ENCODE measurements at regions of chr4 and their contacts with region 1.

Region 1: GRCh38 chr4:7067452-7068278 is at the start of gene GRPEL1:
- DNase-seq: no peak
- total RNA-seq, gene GRPEL1: 43.5 TPM

Region 2: GRCh38 chr4:6783053-6783981 is 284.3 kb before region 1 on chr4:
- intact Hi-C with region 1: loop called (anchors 5 kb)
- DNase-seq: peak; percentile 98

Region 3: GRCh38 chr4:6909073-6909965 is 158.3 kb before region 1 on chr4 and contains the start of gene TBC1D14:
- intact Hi-C with region 1: loop called (anchors 1 kb)
- DNase-seq: peak; percentile 95
- total RNA-seq, gene TBC1D14: 30.8 TPM

Region 4: DNA sequence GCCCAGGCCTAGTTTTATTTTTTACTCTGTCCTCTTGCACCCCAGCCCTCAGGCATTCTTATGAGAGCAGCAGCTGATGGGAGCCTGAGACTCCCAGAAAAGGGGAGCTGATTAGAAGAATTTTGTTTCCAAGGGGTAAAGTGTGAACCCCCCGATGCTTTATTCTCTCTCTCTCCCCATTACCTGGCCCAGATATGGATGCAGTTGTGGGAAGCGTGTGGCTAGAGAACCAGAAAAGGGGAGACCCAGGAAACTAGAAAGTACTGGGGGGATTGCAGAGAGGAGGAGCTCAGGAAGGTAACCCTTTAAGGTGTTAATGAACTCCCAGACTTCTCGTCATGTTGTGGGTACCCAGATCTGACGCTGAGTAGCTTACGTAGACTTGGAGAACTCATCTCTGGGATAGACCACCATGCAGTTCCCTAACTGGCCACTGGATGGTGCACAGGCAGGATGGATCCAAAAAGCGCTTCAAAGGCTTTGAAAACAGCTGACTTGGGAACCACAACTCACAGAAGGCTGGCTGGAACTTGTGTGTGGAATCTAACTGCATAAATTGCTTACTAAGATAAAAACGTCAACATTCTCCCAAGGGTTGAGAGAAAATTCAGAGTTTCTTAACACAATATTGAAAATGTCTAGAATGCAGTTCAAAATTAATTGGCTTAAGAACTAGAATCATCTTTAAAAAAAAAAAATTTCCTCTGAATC is 93.4 kb before region 1 on chr4:
- intact Hi-C with region 1: loop called (anchors 1 kb)
- DNase-seq: peak; percentile 90

Region 5: DNA sequence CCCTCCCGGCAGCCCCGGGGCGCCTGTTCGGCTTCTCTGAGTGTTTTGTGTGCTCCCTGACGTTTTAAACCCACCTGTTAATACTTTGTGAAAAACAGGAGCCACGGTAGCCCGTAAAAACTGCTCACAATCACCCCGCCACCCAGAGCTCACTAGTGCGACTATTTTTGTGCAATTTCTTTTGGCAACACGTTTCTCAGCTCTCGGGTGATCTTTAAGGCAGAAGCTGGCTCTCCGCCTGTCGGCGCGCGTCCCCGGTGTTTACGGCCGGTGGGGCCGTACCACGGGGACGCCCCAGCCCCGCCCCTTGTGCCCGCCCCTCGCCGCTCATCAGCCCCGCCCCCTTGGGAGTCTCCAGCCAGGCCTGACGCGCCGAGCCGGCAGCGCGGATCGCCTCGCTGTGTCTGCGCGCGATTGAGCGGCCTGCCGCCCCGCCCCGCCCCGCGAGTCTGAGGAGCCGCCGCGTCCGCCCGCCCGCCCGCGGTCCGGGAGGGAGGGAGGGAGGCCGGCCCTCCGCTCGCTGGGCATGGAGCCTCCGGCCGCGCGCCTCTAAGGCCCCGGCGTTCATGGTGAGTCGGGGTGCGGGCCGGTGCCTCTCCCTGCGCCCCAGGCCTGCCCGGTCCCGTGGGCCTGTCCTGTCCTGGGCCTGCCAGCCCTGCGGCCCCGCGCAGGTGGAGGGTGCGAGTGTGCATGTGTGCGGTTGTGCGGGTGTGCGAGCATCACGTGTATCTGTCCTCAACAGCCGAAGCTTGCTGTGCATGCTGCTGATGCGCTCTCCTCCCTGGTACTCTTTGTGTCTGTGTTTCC is 80.7 kb before region 1 on chr4:
- intact Hi-C with region 1: loop called (anchors 2 kb)
- DNase-seq: peak; percentile 99

Region 6: GRCh38 chr4:7042697-7043464 is 24.8 kb before region 1 on chr4 and contains the start of gene TADA2B:
- intact Hi-C with region 1: loop called (anchors 1 kb)
- DNase-seq: peak; percentile 98
- total RNA-seq, gene TADA2B: 25.6 TPM